PC-9 (cell line): ENCODE measurements at regions of chr13 and their contacts with region 1.

Region 1: GRCh38 chr13:46975173-46975572 is 78.3 kb upstream of the HTR2A start:
- DNase-seq: no peak
- H3K4me3 ChIP-seq: no peak overlapping the region
- H3K27ac ChIP-seq: no peak overlapping the region
- H3K4me1 ChIP-seq: no peaks in the 10 kb centered on the region
- H3K27me3 ChIP-seq: no peaks in the 10 kb centered on the region
- CTCF ChIP-seq: no peak

Region 2: GRCh38 chr13:46893798-46894560 is 81.2 kb before region 1 on chr13:
- CTCF ChIA-PET with region 1: no interaction called
- POLR2A ChIA-PET with region 1: no interaction called
- intact Hi-C with region 1: loop called (anchors 10 kb)
- DNase-seq: peak in 1 of 2 experiments; percentile 52
- H3K4me3 ChIP-seq: peak overlapping the region; percentile 27; the same call in 1 of the 2 replicates
- H3K27ac ChIP-seq: no peak overlapping the region
- H3K4me1 ChIP-seq: no peaks in the 10 kb centered on the region
- H3K27me3 ChIP-seq: no peaks in the 10 kb centered on the region
- CTCF ChIP-seq: peak; percentile 96

Region 3: GRCh38 chr13:47215741-47216140 is 240.6 kb after region 1 on chr13:
- CTCF ChIA-PET with region 1: no interaction called
- POLR2A ChIA-PET with region 1: no interaction called
- intact Hi-C with region 1: loop called (anchors 10 kb)
- DNase-seq: peak in 1 of 2 experiments; percentile 31
- H3K4me3 ChIP-seq: no peak overlapping the region
- H3K27ac ChIP-seq: no peak overlapping the region
- H3K4me1 ChIP-seq: no peaks in the 10 kb centered on the region
- H3K27me3 ChIP-seq: no peaks in the 10 kb centered on the region
- CTCF ChIP-seq: no peak